ENCODE measurements at regions of chr17 and their contacts with region 1.

Region 1: DNA sequence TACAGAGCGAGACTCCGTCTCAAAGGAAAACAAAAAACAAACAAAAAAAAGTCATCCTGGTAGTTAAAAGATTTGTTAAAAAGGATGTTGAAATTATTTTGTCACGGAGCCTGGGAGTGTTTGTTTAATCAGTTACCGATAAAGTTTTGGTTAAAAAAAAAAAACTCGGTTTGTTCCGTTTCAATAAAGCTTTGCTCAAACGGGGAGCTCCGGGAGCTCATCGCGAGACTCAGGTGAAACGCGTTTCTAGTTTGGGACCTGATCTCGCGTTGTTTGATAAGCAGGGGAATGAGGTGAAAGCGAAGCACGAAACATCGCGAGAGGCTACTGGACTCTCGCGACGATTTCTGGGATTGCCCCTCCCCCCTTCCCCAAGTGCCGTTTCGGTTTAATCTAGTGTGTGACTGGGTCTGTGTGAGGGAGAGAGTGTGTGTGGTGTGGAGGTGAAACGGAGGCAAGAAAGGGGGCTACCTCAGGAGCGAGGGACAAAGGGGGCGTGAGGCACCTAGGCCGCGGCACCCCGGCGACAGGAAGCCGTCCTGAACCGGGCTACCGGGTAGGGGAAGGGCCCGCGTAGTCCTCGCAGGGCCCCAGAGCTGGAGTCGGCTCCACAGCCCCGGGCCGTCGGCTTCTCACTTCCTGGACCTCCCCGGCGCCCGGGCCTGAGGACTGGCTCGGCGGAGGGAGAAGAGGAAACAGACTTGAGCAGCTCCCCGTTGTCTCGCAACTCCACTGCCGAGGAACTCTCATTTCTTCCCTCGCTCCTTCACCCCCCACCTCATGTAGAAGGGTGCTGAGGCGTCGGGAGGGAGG is at the start of gene CDK12:
- DNase-seq: peak; percentile 96
- H3K4me3 ChIP-seq: peak within 1 kb of the TSS; percentile 65 to 95 (median 91)
- H3K27ac ChIP-seq: peak within 1 kb of the TSS; percentile 98
- H3K4me1 ChIP-seq: no peaks in the 10 kb centered on the region; a peak in 3 of 7 replicates
- H3K27me3 ChIP-seq: no peaks in the 10 kb centered on the region
- CTCF ChIP-seq: no peak
- EP300 ChIP-seq: peak in 1 of 2 experiments; percentile 78; a peak in 1 of 3 replicates
- POLR2A ChIP-seq: peak; percentile 96 to 98
- RAD21 ChIP-seq: no peak
- total RNA-seq, gene CDK12: 68.9 and 70.3 TPM in 2 replicates

Region 2: DNA sequence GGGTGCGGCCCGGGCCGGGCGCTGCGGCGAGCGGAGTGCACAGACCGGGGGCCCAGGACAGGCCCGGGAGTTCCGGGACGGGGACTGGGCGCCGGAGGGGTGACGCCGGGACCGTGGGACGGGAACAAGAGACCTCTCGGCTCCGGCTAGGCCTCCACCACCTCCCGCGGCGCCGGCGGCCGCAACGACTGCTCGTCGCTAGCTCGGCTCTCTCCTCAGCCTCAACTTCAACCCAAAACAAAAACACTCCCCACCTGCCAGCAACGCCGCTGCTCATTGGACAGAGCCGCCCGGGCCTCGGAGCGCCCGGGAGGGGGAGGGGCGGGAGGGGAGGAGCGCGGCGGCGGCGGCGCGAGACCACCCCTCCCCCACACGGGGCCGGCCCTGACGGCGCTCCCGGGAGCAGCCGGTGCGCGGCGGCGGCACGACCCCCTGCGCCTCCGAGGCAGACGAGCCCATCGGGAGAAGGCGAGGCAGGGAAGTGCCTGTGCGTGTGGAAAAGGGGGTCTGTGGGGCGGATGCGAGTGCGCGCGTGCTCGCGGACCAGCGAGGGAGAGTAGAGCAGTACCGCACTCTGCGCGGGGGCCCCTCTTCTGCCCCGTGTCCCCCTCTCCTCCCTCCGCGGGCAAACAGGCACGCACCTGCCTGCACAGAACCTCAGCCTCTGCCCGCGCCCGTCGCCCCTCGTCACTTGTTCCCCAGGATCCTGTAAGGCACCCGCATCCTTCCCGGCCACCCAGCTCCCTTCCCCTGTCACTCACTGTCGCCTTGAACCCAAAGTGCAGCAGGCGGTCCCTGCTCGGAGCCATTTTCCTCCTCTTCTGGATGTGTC is 59.7 kb before region 1 on chr17 and contains the start of gene FBXL20:
- CTCF ChIA-PET with region 1: no interaction called
- POLR2A ChIA-PET with region 1: interaction called, 20 read pairs
- DNase-seq: peak; percentile 62 to 91
- H3K4me3 ChIP-seq: peak within 1 kb of the TSS; percentile 81 to 91 (median 86)
- H3K27ac ChIP-seq: peak within 1 kb of the TSS; percentile 79; the same call in 1 of the 2 replicates
- H3K4me1 ChIP-seq: no peaks in the 10 kb centered on the region
- H3K27me3 ChIP-seq: no peaks in the 10 kb centered on the region
- CTCF ChIP-seq: no peak
- EP300 ChIP-seq: 0 out of 3 replicates have a peak, but pooled peaks of 1 of the 2 experiments have one; percentile 60
- POLR2A ChIP-seq: peak; percentile 79 to 90
- RAD21 ChIP-seq: no peak
- total RNA-seq, gene FBXL20: 10.3 and 11.0 TPM in 2 replicates

Region 3: DNA sequence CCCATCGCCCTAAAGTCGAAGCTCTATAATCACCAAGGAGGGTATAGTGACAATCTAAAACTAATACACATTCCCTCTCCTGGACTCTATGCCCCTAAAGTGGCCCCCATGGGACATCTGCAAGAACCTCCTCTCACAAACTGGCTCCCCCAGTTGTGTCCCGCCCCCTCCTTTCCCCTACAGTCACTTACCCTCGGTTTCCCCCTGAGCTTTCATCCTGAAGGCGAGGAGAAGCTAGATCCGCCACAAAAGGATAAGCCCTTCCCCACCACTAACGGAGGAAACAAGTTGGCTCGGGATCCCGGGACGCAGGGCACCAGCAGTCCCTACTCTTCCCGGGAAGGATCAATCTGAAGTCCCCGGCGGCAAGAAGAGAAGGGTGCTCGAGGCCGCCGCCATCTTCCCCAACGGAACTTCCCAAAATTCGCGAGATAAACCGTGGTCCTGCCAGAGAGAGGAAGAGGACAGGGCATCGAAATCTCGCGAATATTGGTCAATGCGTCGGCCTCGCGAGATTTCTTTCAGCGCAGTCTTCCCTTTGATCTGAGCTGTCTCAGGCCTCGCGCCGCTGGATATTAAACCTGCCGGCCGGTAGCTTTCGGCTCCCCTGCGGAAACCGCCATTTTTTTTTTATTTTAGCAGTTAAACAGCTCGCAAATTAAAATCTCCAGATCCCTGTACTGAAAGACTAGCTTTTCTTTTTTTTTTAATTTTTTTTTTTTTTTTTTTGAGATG is 10.3 kb before region 1 on chr17 and contains the start of gene MED1:
- CTCF ChIA-PET with region 1: interaction called, 10 read pairs
- POLR2A ChIA-PET with region 1: interaction called, 167 read pairs
- DNase-seq: peak; percentile 88 to 96
- H3K4me3 ChIP-seq: peak within 1 kb of the TSS; percentile 77 to 100 (median 90)
- H3K27ac ChIP-seq: peak within 1 kb of the TSS; percentile 92
- H3K4me1 ChIP-seq: no peaks in the 10 kb centered on the region; a peak in 1 of 7 replicates
- H3K27me3 ChIP-seq: no peaks in the 10 kb centered on the region
- CTCF ChIP-seq: no peak
- EP300 ChIP-seq: no peak
- POLR2A ChIP-seq: peak; percentile 90 to 97
- RAD21 ChIP-seq: no peak
- total RNA-seq, gene MED1: 56.5 and 57.6 TPM in 2 replicates

Region 4: GRCh38 chr17:39473310-39473709 is 12.0 kb after region 1 on chr17:
- CTCF ChIA-PET with region 1: no interaction called
- POLR2A ChIA-PET with region 1: interaction called, 23 read pairs
- DNase-seq: no peak
- H3K4me3 ChIP-seq: no peak overlapping the region
- H3K27ac ChIP-seq: no peak overlapping the region
- H3K4me1 ChIP-seq: no peaks in the 10 kb centered on the region
- H3K27me3 ChIP-seq: no peaks in the 10 kb centered on the region
- CTCF ChIP-seq: no peak
- EP300 ChIP-seq: no peak
- POLR2A ChIP-seq: no peak
- RAD21 ChIP-seq: no peak

Region 5: DNA sequence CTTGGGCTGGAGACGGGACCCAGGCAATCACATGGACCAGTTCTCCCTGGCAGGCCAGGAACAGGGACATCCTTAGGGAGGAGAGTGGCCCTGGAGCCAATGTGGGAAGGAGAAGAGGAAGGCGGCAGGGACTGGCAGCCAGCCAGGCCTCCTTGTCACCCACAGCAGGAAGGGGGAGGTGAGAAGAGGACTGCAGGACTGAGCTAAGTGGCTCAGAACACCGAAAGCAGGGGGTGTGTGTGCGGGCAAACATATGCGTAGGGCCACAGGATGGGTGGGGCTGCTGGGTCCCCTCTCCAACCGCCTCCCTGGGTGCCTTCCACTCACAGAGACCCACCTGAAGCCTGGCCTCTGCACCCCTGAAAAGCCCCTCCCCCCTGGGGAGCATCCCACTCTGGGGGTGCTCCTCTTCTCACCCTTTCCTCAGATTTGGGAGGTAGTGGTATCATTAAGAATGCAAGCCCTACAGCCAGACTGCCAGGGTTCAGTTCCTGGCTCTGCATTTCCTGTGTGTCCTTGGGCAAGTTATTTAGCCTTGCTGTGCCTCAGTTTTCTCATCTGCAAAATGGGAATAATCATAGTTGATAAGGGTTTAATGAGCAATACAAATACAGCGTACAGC is 215.0 kb after region 1 on chr17:
- CTCF ChIA-PET with region 1: no interaction called
- POLR2A ChIA-PET with region 1: no interaction called
- DNase-seq: no peak
- H3K4me3 ChIP-seq: no peak overlapping the region
- H3K27ac ChIP-seq: no peak overlapping the region
- H3K4me1 ChIP-seq: peaks cover 0 to 15% (median 8%) of the 10 kb centered on the region in 4 experiments; a peak in 6 of 7 replicates
- H3K27me3 ChIP-seq: peaks cover 0 to 3% (median 0%) of the 10 kb centered on the region in 4 experiments; a peak in 1 of 7 replicates
- CTCF ChIP-seq: no peak
- EP300 ChIP-seq: no peak
- POLR2A ChIP-seq: no peak
- RAD21 ChIP-seq: no peak